GM10248 (cell line): ENCODE measurements at regions of chr19 and their contacts with region 1.

Region 1: DNA sequence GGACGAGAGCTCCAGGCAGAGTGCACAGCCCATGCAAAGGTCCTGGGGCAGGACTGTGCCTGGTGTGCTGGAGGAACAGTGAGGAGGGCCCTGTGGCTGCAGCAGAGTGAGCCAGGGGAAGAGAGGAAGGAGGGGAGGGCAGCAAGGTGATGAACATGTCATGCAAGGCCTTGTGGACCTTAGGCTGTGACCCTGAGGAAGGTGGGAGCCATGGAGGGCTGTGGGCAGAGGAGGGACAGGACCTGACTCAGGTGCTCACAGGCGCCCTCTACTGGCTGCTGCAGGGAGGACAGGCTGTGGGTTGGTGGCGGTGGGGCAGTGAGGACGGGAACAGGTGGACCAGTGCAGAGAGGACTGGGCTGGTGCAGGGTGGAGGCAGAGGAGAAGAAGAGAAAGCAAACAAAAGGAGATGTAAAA is 170.3 kb downstream of the PTPRS start:
- DNase-seq: no peak
- CTCF ChIP-seq: peak; percentile 58

Region 2: DNA sequence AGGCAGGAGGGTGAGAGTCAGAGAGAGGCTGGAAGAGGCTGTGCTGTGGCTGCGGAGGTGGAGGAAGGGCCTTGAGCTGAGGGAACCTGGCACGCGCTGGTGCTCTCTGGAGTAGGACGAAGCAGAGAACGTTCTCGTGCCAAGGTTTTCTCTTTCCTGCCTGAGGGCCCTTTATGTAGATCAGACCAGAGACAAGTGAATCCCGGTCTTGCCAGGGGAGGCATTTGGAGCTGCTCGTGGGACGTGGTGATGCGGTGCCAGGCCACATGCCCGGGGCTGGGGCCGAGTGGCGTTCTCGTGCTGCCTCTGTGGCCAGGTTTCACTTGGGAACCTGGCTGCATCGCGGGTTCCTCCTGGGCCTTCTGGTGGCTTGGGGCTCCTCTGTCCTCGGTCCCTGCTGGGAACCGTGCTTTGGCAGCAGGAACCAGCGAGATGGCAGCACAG is 147.2 kb before region 1 on chr19:
- CTCF ChIA-PET with region 1: no interaction called
- POLR2A ChIA-PET with region 1: interaction called, 10 read pairs
- DNase-seq: no peak
- CTCF ChIP-seq: no peak

Region 3: DNA sequence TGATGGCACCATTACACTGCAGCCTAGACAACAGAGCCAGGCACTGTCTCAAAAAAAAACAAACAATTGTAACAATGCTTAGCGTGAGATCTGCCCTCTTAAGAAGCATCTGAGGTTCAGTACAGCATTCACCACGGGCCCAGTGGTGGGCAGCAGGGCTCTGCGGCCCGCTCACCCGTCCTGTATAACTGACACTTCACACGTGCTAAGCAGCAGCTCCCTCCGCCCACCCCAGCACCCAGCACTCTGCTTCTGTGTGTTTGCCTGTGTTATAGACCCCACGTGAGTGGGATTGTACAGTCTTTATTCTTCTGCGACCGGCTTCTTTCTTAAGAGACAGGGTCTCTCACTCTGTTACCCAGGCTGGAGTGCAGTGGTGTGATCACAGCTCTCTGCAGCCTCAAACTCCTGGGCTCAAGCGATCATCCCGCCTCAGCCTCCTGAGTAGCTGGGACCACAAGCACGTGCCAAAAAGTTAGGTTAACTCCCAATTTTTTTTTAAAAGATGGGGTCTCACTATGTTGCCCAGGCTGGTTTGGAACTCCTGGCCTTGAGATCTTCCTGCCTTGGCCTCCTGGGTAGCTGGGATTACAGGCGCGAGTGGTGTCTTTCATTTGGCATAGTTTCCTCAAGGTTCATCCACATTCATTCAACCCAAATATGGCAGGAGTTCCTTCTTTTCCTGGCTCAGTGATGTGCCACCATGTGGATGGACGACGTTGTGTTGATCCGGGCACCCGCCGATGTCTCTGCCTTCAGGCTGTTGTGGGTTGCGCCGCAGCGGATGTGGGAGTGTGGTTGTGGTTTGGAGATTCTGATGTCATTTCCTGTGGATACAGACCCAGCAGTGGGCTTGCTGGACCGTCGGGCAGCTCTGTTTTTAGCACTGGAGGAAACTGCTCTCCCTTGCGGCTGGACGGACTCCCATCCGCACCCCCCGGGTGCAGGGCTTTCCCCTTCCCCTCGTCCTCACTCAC is 31.4 kb before region 1 on chr19:
- CTCF ChIA-PET with region 1: no interaction called
- POLR2A ChIA-PET with region 1: no interaction called
- DNase-seq: peak; percentile 82
- CTCF ChIP-seq: peak; percentile 7